AG04449 (cell line): ENCODE measurements at regions of chr9 and their contacts with region 1.

Region 1: DNA sequence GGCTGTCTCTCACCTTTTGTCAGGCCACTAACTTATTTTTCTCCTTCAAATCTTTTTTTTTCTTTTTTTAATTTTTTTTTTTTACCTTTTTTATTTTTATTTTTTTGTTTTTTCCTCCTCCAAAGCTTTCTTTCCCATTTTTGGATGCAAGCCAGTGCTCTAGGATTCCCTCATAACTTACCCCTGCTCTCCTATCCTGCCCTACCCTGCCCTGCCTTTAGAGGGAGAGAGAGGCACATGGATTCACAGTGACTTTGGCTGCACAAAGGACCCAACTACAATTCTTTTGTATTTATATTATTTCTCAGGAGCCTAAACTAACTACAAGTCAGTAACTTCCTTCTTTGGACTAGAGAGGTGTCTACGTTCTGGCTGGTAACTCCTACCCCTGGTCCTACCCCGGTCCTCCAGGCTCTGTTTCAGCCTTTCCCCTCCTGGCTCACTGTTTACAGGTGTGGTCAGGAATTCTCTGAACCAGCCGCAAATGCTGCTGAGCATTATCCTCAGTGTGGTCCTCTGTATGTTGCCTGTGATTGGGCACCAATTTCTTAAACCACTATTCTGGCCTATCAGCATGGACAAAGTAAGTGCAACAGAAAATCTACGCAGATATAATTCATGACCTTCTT is 8.4 kb upstream of the RUSC2 start:
- DNase-seq: no peak
- H3K4me3 ChIP-seq: no peak overlapping the region
- CTCF ChIP-seq: peak; percentile 74

Region 2: DNA sequence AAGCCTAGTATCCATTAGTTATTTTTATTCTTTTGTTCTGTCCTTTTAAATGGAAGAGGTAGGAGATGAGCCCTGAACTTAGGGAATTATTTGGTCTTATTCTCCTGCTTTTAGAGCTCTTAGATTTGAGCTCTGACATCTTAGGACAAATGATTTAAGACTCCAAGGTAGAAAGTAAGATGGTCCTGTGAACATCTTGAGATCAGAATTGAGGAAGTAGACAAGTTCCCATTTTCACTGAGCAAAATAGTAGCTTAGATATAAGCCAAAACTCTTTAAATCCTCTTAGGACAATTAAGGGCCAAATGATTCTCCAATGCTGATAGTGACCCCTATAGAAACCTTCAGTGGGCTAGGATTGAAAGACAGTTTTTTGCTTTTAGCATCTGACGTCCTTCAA is 44.5 kb before region 1 on chr9:
- CTCF ChIA-PET with region 1: no interaction called
- POLR2A ChIA-PET with region 1: no interaction called
- DNase-seq: no peak
- H3K4me3 ChIP-seq: no peak overlapping the region
- CTCF ChIP-seq: no peak

Region 3: GRCh38 chr9:35464141-35465025 is 17.1 kb before region 1 on chr9:
- CTCF ChIA-PET with region 1: interaction called, 13 read pairs
- POLR2A ChIA-PET with region 1: no interaction called
- DNase-seq: no peak
- H3K4me3 ChIP-seq: no peak overlapping the region
- CTCF ChIP-seq: no peak

Region 4: DNA sequence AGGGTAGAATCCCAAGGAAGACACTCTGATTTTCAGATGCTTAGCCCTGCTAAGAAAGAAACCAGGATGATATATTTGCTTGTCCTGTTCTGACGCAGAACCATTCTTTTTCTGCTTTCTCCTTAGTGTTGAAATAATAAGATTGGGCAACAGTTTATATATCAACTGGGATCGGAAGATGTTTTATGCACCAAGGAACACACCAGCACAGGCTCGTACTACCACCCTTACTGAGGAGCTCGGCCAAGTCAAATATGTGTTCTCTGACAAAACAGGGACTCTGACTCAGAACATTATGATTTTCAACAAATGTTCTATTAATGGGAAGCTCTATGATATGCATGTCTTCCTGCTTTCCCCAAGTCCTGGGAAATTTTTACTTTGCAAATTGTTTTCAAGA is 10.6 kb before region 1 on chr9:
- CTCF ChIA-PET with region 1: interaction called, 17 read pairs
- POLR2A ChIA-PET with region 1: no interaction called
- DNase-seq: no peak
- H3K4me3 ChIP-seq: no peak overlapping the region
- CTCF ChIP-seq: no peak